HepG2 (cell line): ENCODE measurements at regions of chr2 and their contacts with region 1.

Region 1: GRCh38 chr2:221255862-221256261 is 316.2 kb downstream of the EPHA4 start:
- DNase-seq: no peak
- ATAC-seq: no peak
- H3K4me3 ChIP-seq: no peak overlapping the region
- H3K27ac ChIP-seq: no peak overlapping the region
- H3K4me1 ChIP-seq: no peaks in the 10 kb centered on the region
- H3K27me3 ChIP-seq: no peaks in the 10 kb centered on the region
- CTCF ChIP-seq: no peak
- EP300 ChIP-seq: no peak
- POLR2A ChIP-seq: no peak
- RAD21 ChIP-seq: no peak

Region 2: GRCh38 chr2:221276601-221277000 is 20.7 kb after region 1 on chr2:
- CTCF ChIA-PET with region 1: no interaction called
- POLR2A ChIA-PET with region 1: no interaction called
- in situ Hi-C with region 1: no loop called
- intact Hi-C with region 1: loop called (anchors 2 kb)
- DNase-seq: no peak
- ATAC-seq: no peak
- H3K4me3 ChIP-seq: no peak overlapping the region
- H3K27ac ChIP-seq: no peak overlapping the region
- H3K4me1 ChIP-seq: no peaks in the 10 kb centered on the region
- H3K27me3 ChIP-seq: no peaks in the 10 kb centered on the region
- CTCF ChIP-seq: no peak
- EP300 ChIP-seq: no peak
- POLR2A ChIP-seq: no peak
- RAD21 ChIP-seq: no peak

Region 3: GRCh38 chr2:221350616-221351015 is 94.8 kb after region 1 on chr2:
- CTCF ChIA-PET with region 1: no interaction called
- POLR2A ChIA-PET with region 1: no interaction called
- in situ Hi-C with region 1: no loop called
- intact Hi-C with region 1: no loop called
- DNase-seq: no peak
- ATAC-seq: no peak
- H3K4me3 ChIP-seq: no peak overlapping the region
- H3K27ac ChIP-seq: no peak overlapping the region
- H3K4me1 ChIP-seq: no peaks in the 10 kb centered on the region
- H3K27me3 ChIP-seq: no peaks in the 10 kb centered on the region
- CTCF ChIP-seq: no peak
- EP300 ChIP-seq: no peak
- POLR2A ChIP-seq: no peak
- RAD21 ChIP-seq: no peak